ENCODE measurements at regions of chr20 and their contacts with region 1.

Region 1: DNA sequence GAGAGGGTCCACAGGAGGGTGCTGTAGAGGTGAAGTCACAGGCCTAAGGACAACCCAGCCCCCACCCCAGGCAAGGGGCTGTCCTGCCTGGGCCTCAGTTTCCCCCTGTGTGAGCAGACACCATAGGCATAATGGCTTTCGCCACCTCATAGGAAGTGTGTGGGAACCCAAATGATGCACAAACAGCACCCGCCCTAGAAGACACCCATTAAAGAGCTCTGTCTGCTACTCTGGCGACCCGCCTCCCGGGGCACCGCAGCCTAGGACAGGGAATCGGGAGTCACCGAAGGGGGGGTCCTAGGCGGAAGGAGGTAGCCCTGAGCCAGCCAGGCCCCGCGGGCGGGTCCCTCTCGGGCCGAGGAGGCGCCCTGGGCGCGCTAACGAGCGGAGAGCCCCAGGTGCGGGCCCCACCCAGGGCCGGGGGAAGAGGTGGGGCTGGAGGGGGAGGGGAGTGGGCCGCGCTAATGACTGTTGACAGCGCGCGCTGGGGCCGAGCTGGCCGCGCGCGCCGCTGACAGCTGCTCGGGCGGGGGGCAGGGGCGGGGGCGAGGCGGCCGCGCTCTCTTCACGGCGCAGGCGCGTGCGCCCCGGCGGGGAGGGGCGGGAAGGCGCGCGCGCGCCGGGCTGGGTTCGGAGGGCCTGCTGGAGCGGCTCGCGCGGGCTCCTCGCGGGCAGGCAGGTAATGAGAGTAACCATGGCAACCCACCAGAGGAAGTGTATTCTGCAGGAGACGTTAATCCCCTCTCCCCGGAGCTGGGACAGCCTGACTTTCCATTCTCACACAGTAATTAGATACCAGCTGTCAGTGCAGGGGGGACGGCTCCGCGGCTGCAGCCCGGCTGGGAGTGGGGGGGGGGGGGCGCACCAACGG is 48.9 kb downstream of the NOL4L start:
- DNase-seq: peak; percentile 65 to 95 (median 80)
- ATAC-seq: peak; percentile 39
- H3K4me3 ChIP-seq: peak overlapping the region; percentile 54
- H3K4me3 Mint-ChIP-seq: peak overlapping the region; percentile 87
- H3K27ac ChIP-seq: peak overlapping the region; percentile 84 to 91
- H3K27ac Mint-ChIP-seq: peak overlapping the region; percentile 99
- H3K4me1 ChIP-seq: peaks cover 92% of the 10 kb centered on the region
- H3K4me1 Mint-ChIP-seq: peaks cover 88% of the 10 kb centered on the region
- H3K27me3 ChIP-seq: no peaks in the 10 kb centered on the region
- H3K27me3 Mint-ChIP-seq: no peaks in the 10 kb centered on the region
- CTCF ChIP-seq: no peak

Region 2: GRCh38 chr20:32509639-32510066 is 26.5 kb before region 1 on chr20:
- CTCF ChIA-PET with region 1: interaction called, 4 read pairs
- POLR2A ChIA-PET with region 1: interaction called, 15 read pairs
- intact Hi-C with region 1: loop called in 1 of 2 experiments (anchors 5 kb)
- DNase-seq: peak; percentile 51 to 89 (median 67)
- ATAC-seq: peak; percentile 83
- H3K4me3 ChIP-seq: peak overlapping the region; percentile 60
- H3K4me3 Mint-ChIP-seq: peak overlapping the region; percentile 88
- H3K27ac ChIP-seq: peak overlapping the region; percentile 75 to 83
- H3K27ac Mint-ChIP-seq: peak overlapping the region; percentile 96
- H3K4me1 ChIP-seq: peaks cover 85% of the 10 kb centered on the region
- H3K4me1 Mint-ChIP-seq: peaks cover 83% of the 10 kb centered on the region
- H3K27me3 ChIP-seq: no peaks in the 10 kb centered on the region
- H3K27me3 Mint-ChIP-seq: no peaks in the 10 kb centered on the region
- CTCF ChIP-seq: peak; percentile 17

Region 3: GRCh38 chr20:32521780-32522525 is 14.2 kb before region 1 on chr20:
- CTCF ChIA-PET with region 1: interaction called, 44 read pairs
- POLR2A ChIA-PET with region 1: interaction called, 314 read pairs
- intact Hi-C with region 1: loop called (anchors 1 to 2 kb)
- DNase-seq: peak; percentile 52 to 86 (median 65)
- ATAC-seq: peak; percentile 85
- H3K4me3 ChIP-seq: peak overlapping the region; percentile 5
- H3K4me3 Mint-ChIP-seq: peak overlapping the region; percentile 35
- H3K27ac ChIP-seq: peak overlapping the region; percentile 55 to 69
- H3K27ac Mint-ChIP-seq: peak overlapping the region; percentile 99
- H3K4me1 ChIP-seq: peaks cover 72% of the 10 kb centered on the region
- H3K4me1 Mint-ChIP-seq: peaks cover 61% of the 10 kb centered on the region
- H3K27me3 ChIP-seq: no peaks in the 10 kb centered on the region
- H3K27me3 Mint-ChIP-seq: no peaks in the 10 kb centered on the region
- CTCF ChIP-seq: peak; percentile 85

Region 4: GRCh38 chr20:32558526-32558925 is 22.3 kb after region 1 on chr20:
- CTCF ChIA-PET with region 1: no interaction called
- POLR2A ChIA-PET with region 1: interaction called, 29 read pairs
- intact Hi-C with region 1: no loop called
- DNase-seq: no peak
- ATAC-seq: no peak
- H3K4me3 ChIP-seq: no peak overlapping the region
- H3K4me3 Mint-ChIP-seq: no peak overlapping the region
- H3K27ac ChIP-seq: no peak overlapping the region
- H3K27ac Mint-ChIP-seq: peak overlapping the region; percentile 65
- H3K4me1 ChIP-seq: peaks cover 84% of the 10 kb centered on the region
- H3K4me1 Mint-ChIP-seq: peaks cover 77% of the 10 kb centered on the region
- H3K27me3 ChIP-seq: no peaks in the 10 kb centered on the region
- H3K27me3 Mint-ChIP-seq: no peaks in the 10 kb centered on the region
- CTCF ChIP-seq: no peak

Region 5: GRCh38 chr20:32585011-32585518 is 48.9 kb after region 1 on chr20 and contains the start of gene NOL4L:
- CTCF ChIA-PET with region 1: interaction called, 7 read pairs
- POLR2A ChIA-PET with region 1: interaction called, 178 read pairs
- intact Hi-C with region 1: loop called in 1 of 2 experiments (anchors 2 kb)
- DNase-seq: peak in 13 of 14 experiments; percentile 14 to 75 (median 41)
- ATAC-seq: peak; percentile 38
- H3K4me3 ChIP-seq: peak within 1 kb of the TSS; percentile 62
- H3K4me3 Mint-ChIP-seq: peak within 1 kb of the TSS; percentile 100
- H3K27ac ChIP-seq: peak within 1 kb of the TSS in 1 of 2 donors; percentile 35
- H3K27ac Mint-ChIP-seq: peak within 1 kb of the TSS; percentile 95
- H3K4me1 ChIP-seq: peaks cover 41% of the 10 kb centered on the region
- H3K4me1 Mint-ChIP-seq: peaks cover 45% of the 10 kb centered on the region
- H3K27me3 ChIP-seq: no peaks in the 10 kb centered on the region
- H3K27me3 Mint-ChIP-seq: peaks cover 5% of the 10 kb centered on the region
- CTCF ChIP-seq: no peak
- total RNA-seq, gene NOL4L: 53.1 to 55.6 TPM